GM10248 (cell line): ENCODE measurements at regions of chr12 and their contacts with region 1.

Region 1: GRCh38 chr12:118372541-118373495 is at the start of gene TAOK3:
- DNase-seq: peak; percentile 96
- CTCF ChIP-seq: no peak

Region 2: DNA sequence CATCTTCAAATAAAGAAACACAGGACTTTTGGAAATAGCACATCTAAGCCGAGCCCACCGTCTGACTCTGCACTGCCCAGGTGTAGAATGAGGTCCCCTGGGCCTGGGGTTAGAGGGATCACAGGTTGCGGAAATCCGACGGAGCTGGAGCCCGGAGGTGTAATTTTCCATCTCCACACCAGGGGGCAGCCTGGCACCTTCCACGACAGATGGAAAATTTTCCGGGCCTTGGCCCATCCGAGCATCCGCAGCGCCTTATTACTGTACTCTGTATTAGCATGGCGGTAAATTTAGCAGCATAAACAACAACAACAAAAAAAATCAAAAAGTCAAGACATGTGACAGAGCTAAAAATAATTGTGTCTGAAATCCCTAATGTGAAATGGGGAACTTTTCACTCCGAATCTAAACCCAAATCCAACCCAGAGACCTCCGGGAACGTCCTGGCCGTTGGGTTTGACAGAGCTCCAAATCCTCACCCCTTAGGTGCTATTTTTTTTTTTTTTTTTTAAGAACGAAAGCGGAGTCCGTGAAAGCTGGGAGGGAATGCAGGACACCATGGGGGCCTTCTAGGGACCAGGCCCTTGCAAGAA is 497.9 kb before region 1 on chr12:
- CTCF ChIA-PET with region 1: interaction called, 19 read pairs
- POLR2A ChIA-PET with region 1: interaction called, 3 read pairs
- DNase-seq: peak; percentile 72
- CTCF ChIP-seq: peak; percentile 74

Region 3: GRCh38 chr12:118135788-118136558 is 236.8 kb before region 1 on chr12 and contains the start of gene PEBP1:
- CTCF ChIA-PET with region 1: interaction called, 56 read pairs
- POLR2A ChIA-PET with region 1: interaction called, 3 read pairs
- DNase-seq: peak; percentile 97
- CTCF ChIP-seq: peak; percentile 1

Region 4: GRCh38 chr12:118175823-118176447 is 196.9 kb before region 1 on chr12:
- CTCF ChIA-PET with region 1: interaction called, 142 read pairs
- POLR2A ChIA-PET with region 1: no interaction called
- DNase-seq: peak; percentile 53
- CTCF ChIP-seq: no peak

Region 5: DNA sequence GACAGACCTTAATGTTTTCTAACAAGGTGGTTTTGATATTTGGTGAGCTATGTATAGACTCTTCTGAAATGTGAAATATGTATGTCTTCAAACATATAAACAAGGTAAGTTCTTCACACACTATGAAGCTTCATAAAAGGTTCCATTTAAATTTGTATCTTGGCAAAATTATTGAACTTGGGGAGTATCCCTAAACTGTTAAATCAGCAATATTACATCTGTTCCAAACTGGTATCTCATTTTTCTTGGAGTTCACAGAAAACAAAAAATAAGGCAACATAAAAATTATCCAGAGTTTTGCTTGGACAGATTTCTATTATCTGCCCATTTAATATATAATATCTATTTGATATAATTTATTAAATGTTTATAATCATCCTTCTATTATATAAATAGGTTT is 62.5 kb before region 1 on chr12:
- CTCF ChIA-PET with region 1: interaction called, 11 read pairs
- POLR2A ChIA-PET with region 1: interaction called, 5 read pairs
- DNase-seq: no peak
- CTCF ChIP-seq: no peak

Region 6: DNA sequence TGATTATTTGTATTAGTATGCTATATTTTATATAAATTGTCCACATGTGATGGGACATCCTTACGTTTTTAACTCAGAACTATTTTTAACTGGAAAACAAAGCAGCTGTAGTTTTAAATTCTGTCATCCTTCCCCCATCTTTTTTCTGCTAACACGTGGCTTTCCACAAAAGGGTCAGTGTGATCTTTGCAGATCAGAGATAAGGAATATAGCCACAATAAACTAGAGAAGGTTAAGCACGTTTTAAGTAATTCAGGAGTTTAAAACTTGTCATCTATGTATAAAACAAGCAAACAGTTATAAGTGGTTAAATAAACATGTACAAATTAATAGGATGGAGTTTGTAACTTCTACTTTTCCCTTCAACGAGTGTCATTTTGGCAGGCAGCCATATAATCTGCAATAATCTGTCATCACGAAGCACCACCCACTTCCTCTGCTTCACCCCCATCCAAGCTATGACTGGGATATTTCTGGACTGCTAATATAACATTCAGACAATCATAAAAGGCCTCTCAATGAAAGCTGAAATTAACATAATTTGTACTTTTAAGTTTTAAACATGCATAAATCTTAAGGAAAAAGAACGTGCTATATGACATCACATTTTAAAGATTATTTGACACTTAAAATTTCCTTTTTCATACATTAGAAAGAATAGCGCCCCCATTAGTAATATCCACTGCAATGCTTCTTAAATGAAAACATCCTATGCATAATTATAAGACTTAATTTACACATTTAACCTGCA is 15.4 kb before region 1 on chr12:
- CTCF ChIA-PET with region 1: interaction called, 71 read pairs
- POLR2A ChIA-PET with region 1: interaction called, 10 read pairs
- DNase-seq: peak; percentile 47
- CTCF ChIP-seq: peak; percentile 32

Region 7: DNA sequence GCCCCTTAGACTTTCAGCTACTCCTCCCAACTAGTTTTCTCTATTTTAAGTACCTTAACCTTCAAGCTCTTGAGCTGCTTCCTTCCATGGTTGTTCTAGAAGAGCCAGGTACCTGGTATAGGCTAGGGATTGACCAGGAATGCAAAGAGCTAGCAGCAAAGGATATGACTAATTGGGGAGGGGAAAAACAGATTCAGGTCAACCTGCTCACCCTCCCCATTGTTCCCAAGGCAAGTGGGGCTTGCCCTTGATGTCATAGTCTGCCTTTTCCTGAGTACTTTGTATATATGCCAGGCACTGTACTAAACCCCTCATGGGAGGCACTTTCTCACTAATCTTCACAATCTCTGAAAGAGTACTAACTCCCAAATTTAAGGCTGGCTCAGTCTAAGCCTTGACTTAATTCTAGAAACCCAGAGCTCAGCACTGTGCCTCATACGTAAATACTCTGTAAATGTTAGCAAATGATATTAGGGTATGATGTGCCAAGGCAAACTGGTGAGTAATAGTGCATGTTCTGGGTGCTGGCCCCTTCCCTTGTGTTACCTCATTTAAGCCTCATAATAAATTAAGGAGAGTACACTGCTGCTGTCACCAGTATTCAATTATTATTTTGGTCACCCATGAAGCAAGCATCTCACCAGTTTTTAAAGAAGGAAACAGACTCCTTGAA is 45.7 kb after region 1 on chr12:
- CTCF ChIA-PET with region 1: interaction called, 12 read pairs
- POLR2A ChIA-PET with region 1: no interaction called
- DNase-seq: no peak
- CTCF ChIP-seq: no peak

Region 8: GRCh38 chr12:118448341-118448740 is 75.5 kb after region 1 on chr12:
- CTCF ChIA-PET with region 1: no interaction called
- POLR2A ChIA-PET with region 1: no interaction called
- DNase-seq: no peak
- CTCF ChIP-seq: no peak